T-cell (primary cell): ENCODE measurements at regions of chrX and their contacts with region 1.

Region 1: GRCh38 chrX:149512225-149512885 is 7.2 kb upstream of the IDS start:
- DNase-seq: peak in 32 of 35 experiments; percentile 14 to 78 (median 47)
- ATAC-seq: peak; percentile 78 to 86 (median 82)
- H3K4me3 ChIP-seq: no peak overlapping the region
- H3K4me3 Mint-ChIP-seq: no peak overlapping the region
- H3K27ac ChIP-seq: peak overlapping the region; percentile 44
- H3K27ac Mint-ChIP-seq: peak overlapping the region; percentile 69 to 85
- H3K4me1 ChIP-seq: peaks cover 5 to 39% of the 10 kb centered on the region in 2 experiments
- H3K4me1 Mint-ChIP-seq: peaks cover 10 to 31% (median 11%) of the 10 kb centered on the region in 3 donors
- H3K27me3 ChIP-seq: peaks cover 0 to 6% of the 10 kb centered on the region in 2 experiments
- H3K27me3 Mint-ChIP-seq: peaks cover 0 to 25% of the 10 kb centered on the region in 2 donors

Region 2: GRCh38 chrX:149495573-149496071 is 16.7 kb before region 1 on chrX:
- CTCF ChIA-PET with region 1: no interaction called
- POLR2A ChIA-PET with region 1: interaction called in 1 of 2 experiments, 11 read pairs
- DNase-seq: no peak
- ATAC-seq: no peak
- H3K4me3 ChIP-seq: no peak overlapping the region
- H3K4me3 Mint-ChIP-seq: no peak overlapping the region
- H3K27ac ChIP-seq: no peak overlapping the region
- H3K27ac Mint-ChIP-seq: no peak overlapping the region
- H3K4me1 ChIP-seq: peaks cover 0 to 4% of the 10 kb centered on the region in 2 experiments
- H3K4me1 Mint-ChIP-seq: peaks cover 5 to 22% (median 13%) of the 10 kb centered on the region in 3 donors
- H3K27me3 ChIP-seq: no peaks in the 10 kb centered on the region
- H3K27me3 Mint-ChIP-seq: no peaks in the 10 kb centered on the region